ENCODE measurements at regions of chr22 and their contacts with region 1.

Region 1: GRCh38 chr22:35350539-35351503 is 30.1 kb upstream of the HMOX1 start:
- DNase-seq: peak; percentile 93
- ATAC-seq: peak; percentile 90
- H3K4me3 Mint-ChIP-seq: peak overlapping the region; percentile 72
- H3K27ac Mint-ChIP-seq: peak overlapping the region; percentile 55
- H3K4me1 Mint-ChIP-seq: peaks cover 28% of the 10 kb centered on the region
- H3K27me3 Mint-ChIP-seq: peaks cover 6% of the 10 kb centered on the region

Region 2: DNA sequence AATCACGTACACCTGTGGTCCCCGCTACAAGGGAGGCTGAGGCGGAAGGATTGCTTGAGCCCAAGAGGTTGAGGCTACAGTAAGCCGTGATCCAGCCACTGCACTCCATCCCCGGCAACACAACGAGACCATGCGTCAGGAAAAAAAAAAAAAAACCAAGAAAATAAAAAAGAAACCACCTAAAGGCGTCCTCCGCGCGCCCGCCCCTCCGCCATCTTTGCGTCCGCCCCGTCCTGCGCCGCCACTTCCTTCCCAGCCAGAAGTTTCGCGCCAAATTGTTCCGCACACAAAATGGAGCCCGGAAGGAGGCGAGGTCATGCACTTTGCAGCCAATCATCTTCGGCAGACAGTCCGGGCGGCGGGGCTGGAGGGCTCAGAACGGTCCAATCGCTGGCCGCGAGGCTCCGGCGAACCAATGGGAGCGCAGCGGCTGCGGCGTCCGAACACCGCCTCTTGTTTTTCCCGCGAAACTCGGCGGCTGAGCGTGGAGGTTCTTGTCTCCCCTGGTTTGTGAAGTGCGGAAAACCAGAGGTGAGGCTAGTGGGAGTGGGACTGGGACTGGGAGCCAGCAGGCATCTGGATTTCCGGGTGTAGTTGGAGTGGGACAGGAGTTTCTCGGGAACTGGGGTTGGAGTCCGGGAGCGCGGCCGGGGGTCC is 49.0 kb after region 1 on chr22 and contains the start of gene MCM5:
- CTCF ChIA-PET with region 1: interaction called, 8 read pairs
- POLR2A ChIA-PET with region 1: no interaction called
- intact Hi-C with region 1: loop called (anchors 1 to 5 kb)
- DNase-seq: peak; percentile 99
- ATAC-seq: peak; percentile 100
- H3K4me3 Mint-ChIP-seq: peak within 1 kb of the TSS; percentile 86
- H3K27ac Mint-ChIP-seq: peak within 1 kb of the TSS; percentile 98
- H3K4me1 Mint-ChIP-seq: peaks cover 19% of the 10 kb centered on the region
- H3K27me3 Mint-ChIP-seq: no peaks in the 10 kb centered on the region
- total RNA-seq, gene MCM5: 291 to 382 TPM

Region 3: DNA sequence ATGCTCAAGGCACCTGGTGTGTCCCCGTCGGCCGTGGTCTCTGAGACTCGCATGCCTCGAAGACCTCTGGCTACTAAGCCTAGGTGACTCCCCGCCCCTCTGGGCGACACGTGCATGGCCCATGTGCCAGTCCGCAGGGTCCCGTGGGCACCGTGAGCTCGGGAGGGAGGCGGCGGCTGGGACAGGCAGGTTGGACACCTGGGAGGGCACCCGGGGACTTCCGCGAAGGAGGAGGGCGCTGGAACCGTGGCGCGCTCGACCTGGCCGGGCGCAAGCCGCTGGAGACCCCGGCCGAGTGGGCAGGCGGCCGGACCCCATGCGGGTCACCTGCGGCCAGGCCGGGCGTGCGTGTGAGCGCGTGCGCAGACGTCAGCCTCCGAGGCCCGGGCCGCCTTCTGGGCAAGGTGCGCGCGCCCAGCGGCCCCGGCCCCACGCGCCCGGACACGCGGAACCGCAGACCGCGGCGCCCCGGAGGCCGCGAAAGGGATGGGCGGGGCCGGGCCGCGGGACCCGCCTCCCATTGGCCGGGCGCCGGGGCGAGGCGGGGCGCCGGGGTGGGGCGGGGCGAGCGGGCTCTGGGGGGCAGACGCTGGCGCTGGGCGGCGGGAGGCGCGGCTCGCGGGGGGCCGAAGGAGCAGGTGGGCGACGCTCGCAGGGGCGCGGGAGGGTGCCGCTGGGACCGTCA is 189.2 kb after region 1 on chr22:
- CTCF ChIA-PET with region 1: interaction called, 3 read pairs
- POLR2A ChIA-PET with region 1: no interaction called
- intact Hi-C with region 1: loop called in 1 of 2 experiments (anchors 1 kb)
- DNase-seq: peak; percentile 75
- ATAC-seq: peak; percentile 85
- H3K4me3 Mint-ChIP-seq: peak overlapping the region; percentile 62
- H3K27ac Mint-ChIP-seq: no peak overlapping the region
- H3K4me1 Mint-ChIP-seq: peaks cover 3% of the 10 kb centered on the region
- H3K27me3 Mint-ChIP-seq: peaks cover 31% of the 10 kb centered on the region

Region 4: GRCh38 chr22:35627264-35628041 is 276.6 kb after region 1 on chr22:
- CTCF ChIA-PET with region 1: interaction called, 3 read pairs
- POLR2A ChIA-PET with region 1: no interaction called
- intact Hi-C with region 1: loop called (anchors 1 kb)
- DNase-seq: peak; percentile 83
- ATAC-seq: peak; percentile 72
- H3K4me3 Mint-ChIP-seq: peak overlapping the region; percentile 68
- H3K27ac Mint-ChIP-seq: peak overlapping the region; percentile 33
- H3K4me1 Mint-ChIP-seq: peaks cover 26% of the 10 kb centered on the region
- H3K27me3 Mint-ChIP-seq: no peaks in the 10 kb centered on the region

Region 5: GRCh38 chr22:35684270-35684700 is 333.5 kb after region 1 on chr22:
- CTCF ChIA-PET with region 1: no interaction called
- POLR2A ChIA-PET with region 1: no interaction called
- intact Hi-C with region 1: no loop called
- DNase-seq: no peak
- ATAC-seq: no peak
- H3K4me3 Mint-ChIP-seq: no peak overlapping the region
- H3K27ac Mint-ChIP-seq: no peak overlapping the region
- H3K4me1 Mint-ChIP-seq: peaks cover 13% of the 10 kb centered on the region
- H3K27me3 Mint-ChIP-seq: no peaks in the 10 kb centered on the region

Region 6: DNA sequence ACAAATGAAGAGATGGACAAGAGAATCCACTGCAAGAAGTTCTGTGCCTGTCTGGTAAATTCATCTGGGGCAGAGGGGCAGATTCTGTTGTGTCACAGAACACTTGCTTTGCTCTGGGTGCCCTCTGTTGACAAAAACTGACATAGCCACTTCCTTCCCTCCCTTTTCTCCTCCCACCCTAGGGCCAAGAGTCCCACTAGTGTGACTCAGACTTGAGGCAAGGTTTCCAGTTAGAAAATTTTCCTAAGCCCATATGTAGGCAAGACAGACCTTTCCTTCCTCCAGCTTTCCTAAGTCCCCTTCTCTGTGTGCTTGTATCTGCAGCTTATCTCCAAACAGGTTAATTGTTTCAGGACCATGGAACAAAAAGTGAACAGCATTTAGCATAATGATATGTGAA is 571.0 kb after region 1 on chr22:
- CTCF ChIA-PET with region 1: no interaction called
- POLR2A ChIA-PET with region 1: no interaction called
- intact Hi-C with region 1: loop called in 1 of 2 experiments (anchors 5 kb)
- DNase-seq: peak; percentile 60
- ATAC-seq: peak; percentile 81
- H3K4me3 Mint-ChIP-seq: no peak overlapping the region
- H3K27ac Mint-ChIP-seq: no peak overlapping the region
- H3K4me1 Mint-ChIP-seq: peaks cover 7% of the 10 kb centered on the region
- H3K27me3 Mint-ChIP-seq: no peaks in the 10 kb centered on the region

Measured in activated CD4-positive, alpha-beta T cell treated with anti-CD3 and anti-CD28 coated beads for 36 hours (primary cell).